T-cell (primary cell): ENCODE measurements at regions of chr2 and their contacts with region 1.

Region 1: DNA sequence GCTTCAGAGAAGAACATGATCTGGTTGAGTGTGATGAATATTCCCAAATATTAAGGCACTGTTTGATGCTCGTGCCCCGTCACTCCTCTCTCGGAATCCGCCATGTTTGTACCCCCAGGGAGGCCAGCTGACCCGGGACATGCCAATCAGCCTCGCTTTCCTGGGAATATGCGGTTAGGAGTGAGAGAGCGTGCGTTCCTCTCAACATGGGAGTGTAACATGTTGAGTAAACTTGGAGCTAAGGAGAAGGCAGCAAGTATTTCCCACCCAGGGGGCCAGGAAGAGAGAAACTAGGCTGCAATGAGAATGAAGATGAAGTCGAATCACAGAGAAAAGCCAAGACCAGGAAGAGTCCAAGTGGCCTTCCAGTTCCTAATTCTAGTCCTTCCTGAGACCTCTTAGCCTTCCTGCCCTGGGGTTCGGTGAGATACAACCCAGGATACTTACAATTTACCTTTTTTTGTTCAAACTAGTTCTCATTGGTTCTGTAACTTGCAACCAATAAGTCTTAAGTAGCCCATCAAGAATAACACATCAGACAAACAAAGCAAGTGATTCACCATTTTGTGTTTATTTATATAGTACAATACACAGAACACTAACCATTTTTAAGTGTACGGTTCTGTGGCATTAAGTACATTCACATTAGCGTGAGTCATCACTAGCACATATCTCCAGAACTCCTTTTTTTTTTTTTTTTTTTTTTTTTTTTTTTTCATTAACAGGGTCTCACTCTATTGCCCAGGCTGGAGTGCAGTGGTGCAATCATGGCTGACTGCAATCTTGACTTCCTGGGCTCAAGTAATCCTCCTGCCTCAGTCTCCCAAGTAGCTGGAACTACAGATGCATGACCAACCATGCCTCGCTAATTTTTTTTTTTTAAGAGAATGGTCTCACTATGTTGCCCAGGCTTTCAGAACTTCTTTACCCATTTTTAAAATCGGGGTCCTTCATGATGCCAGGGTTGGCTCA is 36.4 kb upstream of the SLC1A4 start:
- DNase-seq: no peak
- ATAC-seq: no peak
- H3K4me3 ChIP-seq: no peak overlapping the region
- H3K4me3 Mint-ChIP-seq: no peak overlapping the region
- H3K27ac ChIP-seq: no peak overlapping the region
- H3K27ac Mint-ChIP-seq: no peak overlapping the region
- H3K4me1 ChIP-seq: peaks cover 0 to 3% of the 10 kb centered on the region in 2 experiments
- H3K4me1 Mint-ChIP-seq: peaks cover under 1 to 6% (median 5%) of the 10 kb centered on the region in 3 donors
- H3K27me3 ChIP-seq: no peaks in the 10 kb centered on the region
- H3K27me3 Mint-ChIP-seq: no peaks in the 10 kb centered on the region

Region 2: GRCh38 chr2:64937687-64938491 is 14.9 kb before region 1 on chr2:
- CTCF ChIA-PET with region 1: no interaction called
- POLR2A ChIA-PET with region 1: no interaction called
- DNase-seq: no peak
- ATAC-seq: no peak
- H3K4me3 ChIP-seq: no peak overlapping the region
- H3K4me3 Mint-ChIP-seq: no peak overlapping the region
- H3K27ac ChIP-seq: no peak overlapping the region
- H3K27ac Mint-ChIP-seq: no peak overlapping the region
- H3K4me1 ChIP-seq: no peaks in the 10 kb centered on the region
- H3K4me1 Mint-ChIP-seq: peaks cover 0 to 28% (median 5%) of the 10 kb centered on the region in 3 donors
- H3K27me3 ChIP-seq: no peaks in the 10 kb centered on the region
- H3K27me3 Mint-ChIP-seq: no peaks in the 10 kb centered on the region

Region 3: GRCh38 chr2:64978514-64979268 is 25.9 kb after region 1 on chr2:
- CTCF ChIA-PET with region 1: interaction called in 1 of 2 experiments, 6 read pairs
- POLR2A ChIA-PET with region 1: interaction called in 1 of 2 experiments, 12 read pairs
- DNase-seq: peak in 1 of 35 experiments; percentile 44
- ATAC-seq: peak in 3 of 4 experiments; percentile 33 to 58 (median 50)
- H3K4me3 ChIP-seq: no peak overlapping the region
- H3K4me3 Mint-ChIP-seq: no peak overlapping the region
- H3K27ac ChIP-seq: no peak overlapping the region
- H3K27ac Mint-ChIP-seq: no peak overlapping the region
- H3K4me1 ChIP-seq: no peaks in the 10 kb centered on the region
- H3K4me1 Mint-ChIP-seq: no peaks in the 10 kb centered on the region
- H3K27me3 ChIP-seq: no peaks in the 10 kb centered on the region
- H3K27me3 Mint-ChIP-seq: no peaks in the 10 kb centered on the region